SK-N-SH (cell line): ENCODE measurements at regions of chr3 and their contacts with region 1.

Region 1: DNA sequence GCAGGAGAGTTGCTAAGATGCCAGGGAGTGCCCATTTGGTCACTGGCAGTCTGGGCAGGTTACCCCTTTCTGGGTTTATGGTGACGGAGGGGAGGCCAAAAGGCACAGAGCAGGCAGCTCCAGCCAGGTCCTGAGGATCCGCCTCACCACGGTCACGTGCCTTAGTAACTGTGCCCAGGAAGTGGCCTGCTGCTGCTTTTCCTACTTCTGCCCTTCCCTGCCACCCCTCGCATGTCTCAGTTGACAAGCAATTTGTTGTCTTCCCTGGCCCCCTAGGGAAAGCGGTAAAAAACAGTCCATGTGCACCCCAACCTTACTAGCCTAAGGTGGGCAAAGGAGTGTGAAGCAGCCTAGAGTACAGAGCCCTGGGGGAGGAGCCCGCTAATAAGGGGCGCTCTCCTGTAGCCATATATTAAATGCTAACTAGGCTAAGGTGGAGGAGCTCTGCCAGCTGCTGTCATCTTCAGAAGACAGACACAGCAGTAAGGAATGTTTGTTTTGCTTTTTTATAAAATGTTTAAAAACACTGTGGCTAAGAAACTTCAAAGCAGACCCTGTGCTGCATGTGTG is 9.1 kb upstream of the LIPH start:
- DNase-seq: no peak
- H3K4me3 ChIP-seq: no peak overlapping the region
- H3K27ac ChIP-seq: no peak overlapping the region
- H3K4me1 ChIP-seq: peaks cover 0 to 2% of the 10 kb centered on the region in 2 experiments; a peak in 1 of 4 replicates
- H3K27me3 ChIP-seq: no peaks in the 10 kb centered on the region
- CTCF ChIP-seq: no peak
- EP300 ChIP-seq: no peak
- RAD21 ChIP-seq: no peak

Region 2: GRCh38 chr3:185353823-185354614 is 207.4 kb before region 1 on chr3:
- CTCF ChIA-PET with region 1: interaction called, 26 read pairs
- POLR2A ChIA-PET with region 1: no interaction called
- DNase-seq: peak; percentile 73
- H3K4me3 ChIP-seq: peak overlapping the region in 1 of 2 experiments; percentile 13; a peak in 1 of 4 replicates
- H3K27ac ChIP-seq: no peak overlapping the region
- H3K4me1 ChIP-seq: no peaks in the 10 kb centered on the region; a peak in 1 of 4 replicates
- H3K27me3 ChIP-seq: no peaks in the 10 kb centered on the region
- CTCF ChIP-seq: peak; percentile 63
- EP300 ChIP-seq: no peak
- RAD21 ChIP-seq: peak; percentile 72

Region 3: DNA sequence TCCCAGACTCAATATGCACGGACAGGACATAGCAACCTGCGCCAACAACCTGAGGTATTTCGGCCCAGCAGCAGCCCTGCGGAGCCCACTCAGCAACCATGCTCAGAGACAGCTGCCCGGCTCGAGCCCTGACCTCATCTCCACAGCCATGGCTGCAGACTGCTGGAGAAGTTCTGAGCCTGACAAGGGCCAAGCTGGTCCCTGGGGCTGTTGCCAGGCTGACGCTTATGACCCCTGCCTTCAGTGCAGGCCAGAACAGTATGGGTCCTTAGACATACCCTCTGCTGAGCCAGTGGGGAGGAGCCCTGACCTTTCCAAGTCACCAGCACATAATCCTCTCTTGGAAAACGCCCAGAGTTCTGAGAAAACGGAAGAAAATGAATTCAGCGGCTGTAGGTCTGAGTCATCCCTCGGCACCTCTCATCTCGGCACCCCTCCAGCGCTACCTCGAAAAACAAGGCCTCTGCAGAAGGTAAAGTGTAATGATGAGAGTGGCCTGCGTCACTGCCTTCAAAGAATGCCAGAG is 88.1 kb before region 1 on chr3:
- CTCF ChIA-PET with region 1: no interaction called
- POLR2A ChIA-PET with region 1: no interaction called
- DNase-seq: no peak
- H3K4me3 ChIP-seq: no peak overlapping the region
- H3K27ac ChIP-seq: no peak overlapping the region
- H3K4me1 ChIP-seq: no peaks in the 10 kb centered on the region
- H3K27me3 ChIP-seq: no peaks in the 10 kb centered on the region
- CTCF ChIP-seq: no peak
- EP300 ChIP-seq: no peak
- RAD21 ChIP-seq: no peak

Region 4: DNA sequence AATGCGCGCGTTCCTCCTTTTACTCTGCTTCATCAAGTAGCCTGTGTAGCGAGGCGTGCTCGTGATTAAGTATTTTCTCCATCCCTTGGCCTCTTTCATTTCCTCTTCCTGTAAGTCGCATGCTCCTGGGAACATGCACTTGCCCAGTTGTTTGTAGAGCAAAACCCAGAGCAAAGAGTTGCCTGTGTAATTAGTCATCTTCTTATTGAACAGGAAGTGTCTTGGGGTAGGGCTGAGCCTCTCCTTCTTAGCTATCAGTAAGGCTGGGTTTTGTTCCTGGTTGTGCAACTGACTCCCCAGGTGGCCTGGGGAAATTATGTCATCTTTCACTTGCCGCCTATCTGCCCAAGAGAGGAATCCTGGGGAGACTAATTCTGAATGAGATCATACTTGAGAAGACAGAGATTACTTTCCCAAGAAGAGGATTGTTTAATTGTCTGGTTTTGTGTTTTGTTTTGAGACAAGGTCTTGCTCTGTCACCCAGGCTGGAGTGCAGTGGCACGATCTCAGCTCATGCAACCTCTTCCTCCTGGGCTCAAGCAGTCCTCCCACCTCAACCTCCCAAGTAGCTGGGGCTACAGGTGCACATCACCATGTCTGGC is 24.0 kb before region 1 on chr3:
- CTCF ChIA-PET with region 1: interaction called, 23 read pairs
- POLR2A ChIA-PET with region 1: no interaction called
- DNase-seq: no peak
- H3K4me3 ChIP-seq: no peak overlapping the region
- H3K27ac ChIP-seq: no peak overlapping the region
- H3K4me1 ChIP-seq: peaks cover 0 to 4% of the 10 kb centered on the region in 2 experiments; a peak in 1 of 4 replicates
- H3K27me3 ChIP-seq: no peaks in the 10 kb centered on the region
- CTCF ChIP-seq: no peak
- EP300 ChIP-seq: no peak
- RAD21 ChIP-seq: no peak

Region 5: DNA sequence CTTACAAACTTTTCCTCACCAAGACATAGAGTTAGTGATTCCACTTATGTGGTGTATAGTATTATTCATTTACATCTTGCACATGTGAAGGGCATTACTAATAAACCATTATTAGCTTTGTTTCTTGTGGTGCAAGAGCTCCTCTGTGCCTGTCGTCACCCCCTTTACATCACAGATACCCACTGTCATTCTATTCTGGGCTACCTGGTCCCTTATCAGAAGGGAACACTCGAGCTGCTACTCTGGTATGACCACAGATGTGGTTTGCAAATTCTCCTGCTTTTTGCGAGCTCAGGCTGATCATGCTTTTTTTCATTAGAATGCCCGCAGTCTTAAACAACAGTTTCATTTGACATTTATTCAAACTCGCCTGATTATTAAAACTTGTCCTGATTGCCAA is 10.7 kb after region 1 on chr3:
- CTCF ChIA-PET with region 1: interaction called, 17 read pairs
- POLR2A ChIA-PET with region 1: no interaction called
- DNase-seq: no peak
- H3K4me3 ChIP-seq: no peak overlapping the region
- H3K27ac ChIP-seq: no peak overlapping the region
- H3K4me1 ChIP-seq: no peaks in the 10 kb centered on the region
- H3K27me3 ChIP-seq: no peaks in the 10 kb centered on the region
- CTCF ChIP-seq: no peak
- EP300 ChIP-seq: no peak
- RAD21 ChIP-seq: no peak

Region 6: DNA sequence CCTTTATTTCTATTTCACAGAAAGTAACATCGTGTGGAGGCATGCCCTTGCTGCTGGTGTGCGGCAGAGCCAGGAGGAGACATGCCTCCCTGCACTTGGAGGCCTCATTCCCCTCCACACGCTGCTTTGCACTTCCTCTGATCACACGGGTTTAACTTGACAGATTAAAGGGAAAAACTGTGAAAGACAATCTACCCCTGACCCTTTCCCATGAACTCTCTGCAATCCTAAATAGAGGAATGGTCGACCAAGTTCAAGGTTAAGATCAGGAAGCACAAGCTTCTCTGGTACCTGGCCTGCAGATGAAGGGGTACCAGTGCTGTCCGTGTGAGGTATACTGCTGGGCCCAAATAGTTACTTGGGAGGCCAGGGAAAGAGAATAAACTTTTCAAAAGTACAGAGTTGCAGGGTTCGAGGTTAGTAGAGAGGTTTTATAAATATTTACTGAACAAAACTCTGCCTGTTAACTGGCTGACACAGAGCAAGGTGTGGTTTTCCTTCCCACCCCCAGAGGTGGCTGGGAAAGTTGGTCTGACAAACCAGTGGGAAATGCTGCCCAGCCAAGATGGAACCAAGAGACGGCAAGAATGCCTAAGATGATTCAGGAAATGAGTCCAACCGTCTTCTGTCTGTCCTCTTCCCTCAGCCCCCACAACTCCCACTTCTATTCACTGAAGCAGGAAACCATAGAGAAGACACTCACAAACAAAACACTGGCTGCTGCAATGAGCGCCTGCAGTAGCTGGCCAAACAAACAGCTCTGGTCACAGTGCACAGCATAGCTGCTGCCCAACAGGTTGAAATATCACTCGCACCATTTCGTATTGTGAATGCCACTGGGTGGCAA is 183.8 kb after region 1 on chr3:
- CTCF ChIA-PET with region 1: no interaction called
- POLR2A ChIA-PET with region 1: no interaction called
- DNase-seq: no peak
- H3K4me3 ChIP-seq: no peak overlapping the region
- H3K27ac ChIP-seq: peak overlapping the region in 1 of 2 experiments; percentile 98; a peak in 2 of 4 replicates
- H3K4me1 ChIP-seq: peaks cover 0 to 28% of the 10 kb centered on the region in 2 experiments; a peak in 2 of 4 replicates
- H3K27me3 ChIP-seq: no peaks in the 10 kb centered on the region
- CTCF ChIP-seq: no peak
- EP300 ChIP-seq: no peak; a peak in 1 of 4 replicates
- RAD21 ChIP-seq: no peak